Calu3 (cell line): ENCODE measurements at regions of chr3 and their contacts with region 1.

Region 1: GRCh38 chr3:99875929-99876841 is 58.5 kb downstream of the CMSS1 start:
- DNase-seq: peak; percentile 71
- H3K4me3 Mint-ChIP-seq: peak overlapping the region; percentile 73
- H3K27ac Mint-ChIP-seq: peak overlapping the region; percentile 79
- H3K4me1 Mint-ChIP-seq: peaks cover 29% of the 10 kb centered on the region
- H3K27me3 Mint-ChIP-seq: no peaks in the 10 kb centered on the region
- CTCF ChIP-seq: no peak

Region 2: DNA sequence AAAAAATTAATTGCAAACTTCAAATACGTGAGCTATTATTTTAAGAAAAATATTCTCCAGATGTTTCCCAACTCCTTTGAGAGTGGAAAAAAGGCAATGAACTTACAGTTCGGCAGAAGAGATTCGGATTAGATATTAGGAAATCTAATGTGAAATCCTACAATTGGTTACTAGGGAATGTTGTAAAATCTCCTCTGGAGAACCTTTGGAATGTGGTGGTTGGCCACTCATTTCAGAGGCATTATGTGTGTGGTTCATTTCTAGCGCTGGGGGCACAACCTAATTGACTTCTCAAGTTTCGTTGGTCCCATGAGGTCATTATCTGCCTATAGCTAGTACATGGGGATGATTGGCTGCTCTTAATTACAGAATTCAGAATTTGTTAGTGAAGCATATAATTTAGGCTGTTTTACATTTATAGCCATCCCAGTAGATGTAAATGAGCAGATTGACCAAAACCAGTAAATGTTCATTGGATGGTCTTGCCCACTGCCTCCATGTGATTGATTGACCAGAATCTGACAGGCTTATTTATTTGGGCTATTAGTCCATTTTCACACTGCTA is 93.1 kb before region 1 on chr3:
- CTCF ChIA-PET with region 1: no interaction called
- intact Hi-C with region 1: no loop called
- DNase-seq: no peak
- H3K4me3 Mint-ChIP-seq: no peak overlapping the region
- H3K27ac Mint-ChIP-seq: no peak overlapping the region
- H3K4me1 Mint-ChIP-seq: no peaks in the 10 kb centered on the region
- H3K27me3 Mint-ChIP-seq: no peaks in the 10 kb centered on the region
- CTCF ChIP-seq: no peak

Region 3: DNA sequence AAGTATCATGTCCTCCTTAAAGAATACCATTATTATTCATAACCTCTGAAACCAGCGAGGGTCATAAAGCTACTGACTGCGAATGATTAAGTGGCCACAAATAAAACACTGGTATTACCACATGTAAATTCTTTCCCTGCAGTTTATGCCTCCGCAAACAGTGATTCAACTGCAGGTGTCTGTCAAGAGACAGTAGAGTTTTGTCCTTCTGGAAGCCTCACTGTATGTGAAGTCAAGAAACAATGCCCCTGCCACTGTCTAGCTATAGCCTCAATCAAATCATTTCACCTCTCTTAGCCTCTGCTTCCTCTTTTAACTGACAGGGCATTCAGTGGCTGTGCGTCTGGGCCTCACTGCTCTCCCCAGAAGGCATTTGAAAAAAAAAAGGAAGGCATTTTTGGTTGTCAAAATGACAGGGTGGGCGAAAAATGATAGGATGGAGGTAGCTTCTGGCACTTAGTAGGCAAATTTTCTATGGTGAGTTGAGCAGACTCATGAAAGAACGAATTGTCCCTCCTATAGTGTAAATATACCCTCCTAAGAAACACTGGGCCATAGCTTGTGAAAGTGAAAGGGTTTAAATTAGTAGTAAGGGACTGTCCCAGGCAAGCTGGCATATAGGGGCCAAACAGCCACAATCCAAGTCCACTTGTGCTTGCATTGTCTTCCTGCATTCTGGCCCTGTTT is 171.4 kb after region 1 on chr3:
- CTCF ChIA-PET with region 1: no interaction called
- intact Hi-C with region 1: loop called (anchors 10 kb)
- DNase-seq: peak; percentile 37
- H3K4me3 Mint-ChIP-seq: peak overlapping the region; percentile 49
- H3K27ac Mint-ChIP-seq: peak overlapping the region; percentile 84
- H3K4me1 Mint-ChIP-seq: peaks cover 57% of the 10 kb centered on the region
- H3K27me3 Mint-ChIP-seq: no peaks in the 10 kb centered on the region
- CTCF ChIP-seq: no peak